ENCODE measurements at regions of chr11 and their contacts with region 1.

Region 1: DNA sequence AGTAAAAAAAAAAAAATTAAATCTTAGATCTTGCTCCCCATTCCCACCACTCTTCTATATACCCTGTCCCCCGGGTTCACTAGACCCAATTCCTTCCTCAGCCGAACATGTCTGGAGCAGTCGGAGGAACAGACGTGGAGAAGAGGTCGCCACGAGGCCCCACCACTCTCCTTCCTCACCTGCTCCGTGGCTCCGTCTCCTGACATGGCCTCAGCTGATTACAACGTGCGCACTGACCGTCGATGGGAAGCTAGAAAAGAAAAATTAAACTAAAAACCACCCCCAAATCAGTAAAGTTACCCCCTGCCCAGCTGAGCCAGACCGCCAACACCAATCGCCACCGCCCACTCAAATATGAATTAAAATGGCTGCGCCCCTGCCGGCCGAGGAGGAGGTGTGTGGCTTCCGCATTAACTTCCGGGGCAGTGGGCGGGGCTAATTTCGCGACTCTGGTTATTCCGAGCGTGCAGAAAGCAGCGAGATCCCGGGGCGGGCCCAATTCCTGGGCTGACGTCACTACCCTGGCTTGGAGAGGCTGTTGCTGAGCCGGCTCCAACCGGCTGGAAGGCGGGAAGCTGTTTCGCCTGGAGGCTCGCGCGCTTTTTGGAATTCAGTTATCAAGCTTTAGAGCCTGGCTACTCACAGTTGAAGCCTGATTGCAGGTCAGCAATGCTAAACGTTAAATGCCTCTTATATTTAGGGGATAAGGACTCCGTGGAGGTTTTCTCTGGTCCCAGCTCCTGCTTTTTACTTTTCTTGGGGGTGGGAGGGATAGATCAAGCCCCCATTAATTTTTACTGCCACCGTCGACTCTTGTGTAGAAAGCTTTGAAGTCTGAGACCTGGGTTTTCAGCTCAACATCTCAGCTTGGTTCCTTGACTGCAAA is at the start of gene CSTF3:
- DNase-seq: peak; percentile 100
- total RNA-seq, gene CSTF3: 16.0 TPM

Region 2: DNA sequence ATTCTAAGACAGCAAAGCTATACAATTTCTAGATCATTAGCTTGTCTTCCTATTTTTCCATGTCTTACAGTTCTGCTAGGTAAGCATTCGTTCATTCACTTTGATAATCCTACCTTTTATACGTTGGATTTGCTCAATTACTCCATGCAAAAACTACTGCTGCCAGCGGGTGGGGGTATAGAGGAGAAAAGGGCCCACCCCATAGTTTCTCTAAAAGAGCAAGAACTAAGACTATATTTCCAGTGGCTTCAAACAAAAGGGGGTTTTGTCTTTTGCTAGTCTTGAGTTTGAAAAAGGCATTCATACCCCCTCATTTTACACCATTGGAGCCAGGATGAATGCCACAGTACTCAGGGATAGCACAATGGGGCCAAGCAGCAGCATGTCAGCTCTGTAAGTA is 881.7 kb before region 1 on chr11:
- intact Hi-C with region 1: no loop called
- DNase-seq: no peak

Region 3: GRCh38 chr11:32705309-32706033 is 455.9 kb before region 1 on chr11:
- intact Hi-C with region 1: no loop called
- DNase-seq: no peak

Region 4: DNA sequence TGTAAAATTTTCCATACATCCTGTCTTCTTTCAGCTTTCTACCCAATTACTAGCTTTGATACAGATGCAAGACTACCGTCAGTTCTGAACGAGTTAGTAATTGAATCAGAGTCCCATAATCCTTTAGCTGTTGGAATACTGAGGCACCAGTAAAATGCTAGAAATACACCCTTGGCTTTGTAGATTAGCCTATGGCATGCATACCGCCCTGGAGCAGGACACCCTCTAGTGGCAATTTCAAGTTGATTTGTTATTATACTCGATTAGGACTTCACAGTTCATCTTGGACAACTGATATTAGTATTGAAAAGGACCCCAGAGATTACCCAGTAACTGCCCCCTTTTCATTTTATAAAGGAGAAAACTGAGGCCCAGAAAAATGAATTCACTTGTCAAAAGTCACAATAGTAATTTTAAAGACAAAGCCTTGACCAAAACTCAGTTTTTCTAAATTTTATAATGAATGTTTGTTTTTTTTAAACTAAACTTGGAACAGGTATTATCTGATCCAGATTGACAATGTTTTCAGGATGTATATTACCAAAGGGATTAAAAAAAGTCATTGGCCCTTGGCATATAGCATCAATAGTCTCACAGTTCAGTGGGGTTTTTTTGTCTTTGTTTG is 168.5 kb after region 1 on chr11:
- intact Hi-C with region 1: loop called (anchors 2 kb)
- DNase-seq: no peak

Region 5: GRCh38 chr11:33773987-33774735 is 612.8 kb after region 1 on chr11 and contains the start of gene FBXO3:
- intact Hi-C with region 1: loop called (anchors 10 kb)
- DNase-seq: peak; percentile 94
- total RNA-seq, gene FBXO3: 46.1 TPM